ENCODE measurements at regions of chr5 and their contacts with region 1.

Region 1: DNA sequence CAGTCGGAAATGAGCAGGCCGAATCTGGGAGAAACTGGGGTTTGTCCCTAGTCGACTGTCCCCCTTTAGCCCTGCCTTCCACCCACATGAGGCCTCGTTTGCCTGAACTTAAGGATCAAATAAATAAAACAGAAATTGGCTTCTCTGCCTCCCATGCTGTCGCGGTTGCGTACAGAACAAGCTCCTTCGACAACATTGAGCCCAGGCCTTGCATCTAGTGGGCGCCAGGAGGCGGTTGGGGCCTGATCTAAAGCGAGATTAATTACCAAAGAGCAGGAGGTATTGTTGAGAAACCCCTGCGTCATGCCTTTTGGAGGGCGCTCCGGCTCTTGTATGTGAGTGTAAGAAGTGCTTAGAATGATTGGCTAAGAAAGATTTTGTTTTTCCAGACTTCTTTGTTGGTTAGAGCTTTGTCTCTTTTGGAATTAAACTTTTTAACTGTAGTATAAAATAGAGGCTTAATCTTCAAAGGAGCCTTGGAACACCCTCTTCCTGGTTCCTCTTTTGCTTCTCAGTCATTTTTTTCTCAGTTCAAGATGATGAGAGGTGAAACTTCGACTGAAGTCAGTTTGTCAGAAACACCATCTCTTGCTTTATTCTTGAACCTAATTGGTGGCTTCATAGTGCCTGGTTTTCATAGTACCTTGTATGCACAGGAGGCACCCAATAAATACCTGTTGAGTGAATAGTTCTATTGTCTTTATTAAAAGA is 827 bp downstream of the ATP6V0E1 start:
- DNase-seq: peak; percentile 51 to 90 (median 72)
- ATAC-seq: peak; percentile 84
- H3K4me3 ChIP-seq: peak overlapping the region; percentile 98
- H3K4me3 Mint-ChIP-seq: peak overlapping the region; percentile 92
- H3K27ac ChIP-seq: peak overlapping the region; percentile 91 to 96
- H3K27ac Mint-ChIP-seq: peak overlapping the region; percentile 96
- H3K4me1 ChIP-seq: peaks cover 37% of the 10 kb centered on the region
- H3K4me1 Mint-ChIP-seq: peaks cover 57% of the 10 kb centered on the region
- H3K27me3 ChIP-seq: no peaks in the 10 kb centered on the region
- H3K27me3 Mint-ChIP-seq: no peaks in the 10 kb centered on the region
- CTCF ChIP-seq: peak; percentile 63

Region 2: GRCh38 chr5:171797543-171797942 is 1186.9 kb before region 1 on chr5:
- CTCF ChIA-PET with region 1: no interaction called
- POLR2A ChIA-PET with region 1: no interaction called
- intact Hi-C with region 1: no loop called
- DNase-seq: no peak
- ATAC-seq: no peak
- H3K4me3 ChIP-seq: no peak overlapping the region
- H3K4me3 Mint-ChIP-seq: no peak overlapping the region
- H3K27ac ChIP-seq: no peak overlapping the region
- H3K27ac Mint-ChIP-seq: no peak overlapping the region
- H3K4me1 ChIP-seq: no peaks in the 10 kb centered on the region
- H3K4me1 Mint-ChIP-seq: no peaks in the 10 kb centered on the region
- H3K27me3 ChIP-seq: peaks cover 0 to 2% of the 10 kb centered on the region in 2 experiments
- H3K27me3 Mint-ChIP-seq: peaks cover 16% of the 10 kb centered on the region
- CTCF ChIP-seq: no peak

Region 3: GRCh38 chr5:172951791-172952511 is 32.4 kb before region 1 on chr5:
- CTCF ChIA-PET with region 1: no interaction called
- POLR2A ChIA-PET with region 1: no interaction called
- intact Hi-C with region 1: no loop called
- DNase-seq: no peak
- ATAC-seq: no peak
- H3K4me3 ChIP-seq: no peak overlapping the region
- H3K4me3 Mint-ChIP-seq: no peak overlapping the region
- H3K27ac ChIP-seq: no peak overlapping the region
- H3K27ac Mint-ChIP-seq: no peak overlapping the region
- H3K4me1 ChIP-seq: no peaks in the 10 kb centered on the region
- H3K4me1 Mint-ChIP-seq: peaks cover 5% of the 10 kb centered on the region
- H3K27me3 ChIP-seq: no peaks in the 10 kb centered on the region
- H3K27me3 Mint-ChIP-seq: no peaks in the 10 kb centered on the region
- CTCF ChIP-seq: no peak

Region 4: DNA sequence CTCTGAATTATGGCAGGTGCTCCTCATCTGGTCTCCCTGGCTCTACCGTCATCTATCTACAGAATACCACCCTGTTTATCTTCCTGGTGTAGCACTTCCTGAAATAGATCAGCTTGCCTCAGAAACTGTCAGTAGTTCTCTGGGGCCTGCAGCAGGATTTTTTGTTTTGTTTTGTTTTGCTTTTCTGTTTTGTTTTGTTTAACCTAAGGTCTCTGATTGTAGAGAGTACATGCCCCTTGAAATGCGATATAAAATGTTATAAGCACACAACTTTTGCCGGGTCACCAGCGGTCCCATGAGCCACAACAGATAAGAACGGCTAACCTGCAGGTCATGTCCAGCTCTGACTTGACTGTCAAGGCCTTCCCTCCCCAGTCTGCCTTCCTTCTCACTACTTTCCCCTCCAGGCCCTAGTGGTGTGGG is 45.1 kb after region 1 on chr5:
- CTCF ChIA-PET with region 1: no interaction called
- POLR2A ChIA-PET with region 1: interaction called, 32 read pairs
- intact Hi-C with region 1: loop called (anchors 5 kb)
- DNase-seq: peak in 1 of 14 experiments; percentile 15
- ATAC-seq: peak; percentile 79
- H3K4me3 ChIP-seq: no peak overlapping the region
- H3K4me3 Mint-ChIP-seq: no peak overlapping the region
- H3K27ac ChIP-seq: peak overlapping the region; percentile 38 to 61
- H3K27ac Mint-ChIP-seq: no peak overlapping the region
- H3K4me1 ChIP-seq: peaks cover 32% of the 10 kb centered on the region
- H3K4me1 Mint-ChIP-seq: peaks cover 21% of the 10 kb centered on the region
- H3K27me3 ChIP-seq: no peaks in the 10 kb centered on the region
- H3K27me3 Mint-ChIP-seq: no peaks in the 10 kb centered on the region
- CTCF ChIP-seq: no peak

Region 5: DNA sequence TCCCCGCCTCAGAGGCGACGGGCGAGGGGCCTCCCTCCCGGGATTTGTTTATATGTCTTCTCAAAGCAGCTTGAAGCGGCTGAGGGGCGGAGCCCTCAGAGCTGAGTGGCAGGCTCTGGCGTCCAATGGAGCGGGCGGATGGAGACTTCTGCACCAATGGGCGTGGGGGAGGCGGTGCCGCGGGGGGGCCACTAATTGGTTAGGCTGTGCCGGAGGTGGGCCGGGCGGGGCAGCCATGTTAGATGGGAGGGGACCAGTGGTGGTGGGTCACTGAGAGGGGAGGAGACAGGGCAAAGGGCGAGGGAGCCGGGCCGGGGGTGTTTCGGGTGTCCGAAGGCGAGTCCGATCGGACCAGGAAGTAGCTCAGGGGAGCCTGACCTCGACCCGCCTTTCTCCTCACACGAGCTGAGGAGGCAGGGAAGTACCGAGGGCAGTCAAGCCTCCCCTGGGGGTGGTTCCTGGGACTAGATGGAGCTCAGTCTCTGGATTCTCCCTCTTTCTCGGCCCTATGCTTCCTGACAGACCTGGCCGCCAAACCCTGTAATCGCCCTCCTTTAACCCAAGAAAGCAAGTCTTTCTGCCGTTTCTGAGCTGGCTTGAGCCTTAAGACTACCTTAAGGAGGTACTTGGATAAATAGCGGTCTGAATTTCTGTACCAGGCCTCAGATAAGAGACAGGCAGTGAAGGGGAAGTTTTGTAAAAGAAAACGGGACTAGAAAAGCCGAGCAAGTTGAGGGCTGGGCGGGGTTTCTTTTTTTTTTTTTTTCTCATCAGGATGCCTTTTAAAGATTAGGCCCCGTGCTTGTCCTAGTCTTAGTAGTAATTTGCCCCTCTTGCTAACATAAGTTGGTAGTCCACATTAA is 72.9 kb after region 1 on chr5:
- CTCF ChIA-PET with region 1: interaction called, 14 read pairs
- POLR2A ChIA-PET with region 1: interaction called, 87 read pairs
- intact Hi-C with region 1: loop called (anchors 1 kb)
- DNase-seq: peak; percentile 96 to 99 (median 98)
- ATAC-seq: peak; percentile 80
- H3K4me3 ChIP-seq: peak overlapping the region; percentile 69
- H3K4me3 Mint-ChIP-seq: peak overlapping the region; percentile 98
- H3K27ac ChIP-seq: peak overlapping the region; percentile 91 to 97
- H3K27ac Mint-ChIP-seq: peak overlapping the region; percentile 97
- H3K4me1 ChIP-seq: peaks cover 27% of the 10 kb centered on the region
- H3K4me1 Mint-ChIP-seq: peaks cover 70% of the 10 kb centered on the region
- H3K27me3 ChIP-seq: no peaks in the 10 kb centered on the region
- H3K27me3 Mint-ChIP-seq: no peaks in the 10 kb centered on the region
- CTCF ChIP-seq: no peak

Region 6: DNA sequence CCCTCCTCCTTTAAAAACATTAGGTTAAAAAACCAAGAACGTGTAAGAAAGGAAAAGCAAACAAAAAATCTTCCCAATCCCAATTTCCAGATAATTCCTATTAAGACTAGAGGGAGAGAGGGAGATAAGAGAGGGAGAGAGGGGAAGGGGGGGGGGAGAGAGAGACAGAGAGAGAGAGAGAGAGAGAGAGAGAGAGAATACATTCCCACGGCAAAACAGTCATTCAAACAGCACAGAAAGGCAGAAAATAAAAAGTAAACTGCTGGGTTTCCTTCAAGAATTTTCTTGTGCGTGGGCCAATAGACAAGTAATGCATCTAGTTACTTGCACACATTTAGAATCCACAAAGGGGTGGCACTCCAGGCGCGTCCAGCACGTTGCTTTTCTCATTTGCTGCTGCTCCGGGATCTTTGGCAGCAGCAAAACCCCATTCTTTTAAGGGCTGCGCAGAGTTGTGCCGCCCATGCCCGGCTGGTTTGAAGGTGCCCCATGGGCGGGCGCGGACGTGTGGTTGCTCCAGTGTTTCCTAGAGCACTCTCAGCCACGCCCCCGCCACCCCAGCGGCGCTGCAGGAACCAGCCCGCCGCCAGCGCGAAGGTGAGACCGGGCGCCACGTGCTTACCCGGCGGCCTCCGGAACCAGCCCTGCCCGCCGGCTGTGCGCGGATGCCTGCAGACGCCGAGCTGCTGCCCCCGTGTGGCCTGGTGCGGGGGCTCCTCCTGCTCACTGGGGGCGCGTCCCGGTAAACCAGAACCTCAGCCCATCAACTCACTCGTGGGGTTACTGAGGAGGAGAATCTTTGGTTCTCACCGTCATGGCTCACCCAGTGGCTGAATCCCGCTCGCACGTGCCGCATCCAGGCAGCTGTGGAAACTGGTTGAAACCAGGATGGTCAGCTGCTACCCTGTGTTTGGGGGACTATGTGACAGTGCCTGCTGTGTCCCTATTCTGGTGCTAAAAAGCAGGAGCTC is 299.2 kb after region 1 on chr5:
- CTCF ChIA-PET with region 1: no interaction called
- POLR2A ChIA-PET with region 1: no interaction called
- intact Hi-C with region 1: loop called in 1 of 2 experiments (anchors 2 kb)
- DNase-seq: peak; percentile 42 to 79 (median 62)
- ATAC-seq: peak; percentile 97
- H3K4me3 ChIP-seq: no peak overlapping the region
- H3K4me3 Mint-ChIP-seq: peak overlapping the region; percentile 20
- H3K27ac ChIP-seq: no peak overlapping the region
- H3K27ac Mint-ChIP-seq: no peak overlapping the region
- H3K4me1 ChIP-seq: peaks cover 10% of the 10 kb centered on the region
- H3K4me1 Mint-ChIP-seq: no peaks in the 10 kb centered on the region
- H3K27me3 ChIP-seq: peaks cover 33 to 37% of the 10 kb centered on the region in 2 experiments
- H3K27me3 Mint-ChIP-seq: peaks cover 89% of the 10 kb centered on the region
- CTCF ChIP-seq: peak; percentile 53

Region 7: GRCh38 chr5:173573126-173573960 is 588.9 kb after region 1 on chr5:
- CTCF ChIA-PET with region 1: interaction called, 3 read pairs
- POLR2A ChIA-PET with region 1: no interaction called
- intact Hi-C with region 1: loop called (anchors 2 to 5 kb)
- DNase-seq: peak; percentile 35 to 76 (median 52)
- ATAC-seq: peak; percentile 73
- H3K4me3 ChIP-seq: no peak overlapping the region
- H3K4me3 Mint-ChIP-seq: no peak overlapping the region
- H3K27ac ChIP-seq: no peak overlapping the region
- H3K27ac Mint-ChIP-seq: no peak overlapping the region
- H3K4me1 ChIP-seq: peaks cover 8% of the 10 kb centered on the region
- H3K4me1 Mint-ChIP-seq: peaks cover 7% of the 10 kb centered on the region
- H3K27me3 ChIP-seq: peaks cover 8 to 16% of the 10 kb centered on the region in 2 experiments
- H3K27me3 Mint-ChIP-seq: peaks cover 16% of the 10 kb centered on the region
- CTCF ChIP-seq: peak; percentile 93

Region 8: DNA sequence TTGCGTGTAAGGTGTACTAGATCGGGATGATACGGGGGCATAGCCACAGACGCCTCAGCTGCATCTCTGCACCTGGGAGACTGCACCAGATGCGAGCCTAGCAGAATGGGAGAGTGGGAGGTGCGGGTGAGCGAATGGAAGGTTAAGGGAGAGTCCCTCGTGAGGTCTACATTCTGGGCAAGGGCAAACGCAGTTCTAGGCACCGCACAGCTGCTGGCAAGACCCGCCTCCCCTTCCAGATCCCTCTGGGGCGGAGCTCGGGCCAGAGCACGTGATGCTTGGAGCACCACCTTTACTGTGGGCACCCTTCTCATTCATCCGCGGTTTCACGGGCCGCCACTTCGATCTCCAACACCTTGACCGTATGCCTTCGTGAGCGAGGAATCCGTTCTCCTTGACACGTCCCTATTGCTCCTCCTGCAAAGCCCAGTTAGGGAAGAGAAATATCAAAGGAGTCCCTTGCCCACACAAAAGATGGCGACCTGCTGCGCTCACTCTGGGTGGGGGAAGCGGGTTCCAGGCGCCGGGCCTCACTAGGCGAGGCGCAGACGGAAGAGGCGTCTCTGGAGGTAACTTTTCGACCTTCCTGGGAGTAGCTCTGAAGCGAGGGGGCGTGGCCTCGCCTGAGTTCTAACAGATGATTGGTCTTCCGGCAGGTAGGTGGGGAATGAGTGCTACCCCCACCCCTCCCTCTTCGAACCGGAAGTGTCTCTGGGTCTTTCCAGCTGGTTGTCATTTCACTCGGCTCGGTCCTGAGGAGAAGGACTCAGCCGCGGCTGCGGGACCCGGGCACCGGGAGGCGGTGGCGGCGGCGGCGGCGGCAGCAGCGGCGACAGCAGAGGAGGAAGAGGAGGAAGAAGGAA is 903.4 kb after region 1 on chr5 and contains the start of gene CPEB4:
- CTCF ChIA-PET with region 1: no interaction called
- POLR2A ChIA-PET with region 1: no interaction called
- intact Hi-C with region 1: loop called in 1 of 2 experiments (anchors 10 kb)
- DNase-seq: peak; percentile 92 to 100 (median 96)
- ATAC-seq: peak; percentile 94
- H3K4me3 ChIP-seq: peak within 1 kb of the TSS; percentile 87
- H3K4me3 Mint-ChIP-seq: peak within 1 kb of the TSS; percentile 99
- H3K27ac ChIP-seq: peak within 1 kb of the TSS; percentile 77 to 89
- H3K27ac Mint-ChIP-seq: peak within 1 kb of the TSS; percentile 91
- H3K4me1 ChIP-seq: peaks cover 47% of the 10 kb centered on the region
- H3K4me1 Mint-ChIP-seq: peaks cover 90% of the 10 kb centered on the region
- H3K27me3 ChIP-seq: no peaks in the 10 kb centered on the region
- H3K27me3 Mint-ChIP-seq: no peaks in the 10 kb centered on the region
- CTCF ChIP-seq: no peak
- total RNA-seq, gene CPEB4: 18.3 to 19.2 TPM